Naive thymus-derived CD4-positive, alpha-beta T cell (primary cell): ENCODE measurements at regions of chr11 and their contacts with region 1.

Region 1: GRCh38 chr11:123062158-123062891 is 389 bp upstream of the HSPA8 start:
- DNase-seq: peak; percentile 97 to 100 (median 100)
- ATAC-seq: peak; percentile 89
- H3K4me3 ChIP-seq: peak overlapping the region; percentile 91
- H3K4me3 Mint-ChIP-seq: peak overlapping the region; percentile 87 to 100 (median 99)
- H3K27ac ChIP-seq: peak overlapping the region; percentile 96
- H3K27ac Mint-ChIP-seq: peak overlapping the region; percentile 96 to 100 (median 99)
- H3K4me1 ChIP-seq: peaks cover 42 to 55% of the 10 kb centered on the region in 2 donors
- H3K4me1 Mint-ChIP-seq: peaks cover 48 to 67% (median 56%) of the 10 kb centered on the region in 7 donors
- H3K27me3 ChIP-seq: no peaks in the 10 kb centered on the region
- H3K27me3 Mint-ChIP-seq: peaks cover 0 to 7% (median 0%) of the 10 kb centered on the region in 5 donors

Region 2: DNA sequence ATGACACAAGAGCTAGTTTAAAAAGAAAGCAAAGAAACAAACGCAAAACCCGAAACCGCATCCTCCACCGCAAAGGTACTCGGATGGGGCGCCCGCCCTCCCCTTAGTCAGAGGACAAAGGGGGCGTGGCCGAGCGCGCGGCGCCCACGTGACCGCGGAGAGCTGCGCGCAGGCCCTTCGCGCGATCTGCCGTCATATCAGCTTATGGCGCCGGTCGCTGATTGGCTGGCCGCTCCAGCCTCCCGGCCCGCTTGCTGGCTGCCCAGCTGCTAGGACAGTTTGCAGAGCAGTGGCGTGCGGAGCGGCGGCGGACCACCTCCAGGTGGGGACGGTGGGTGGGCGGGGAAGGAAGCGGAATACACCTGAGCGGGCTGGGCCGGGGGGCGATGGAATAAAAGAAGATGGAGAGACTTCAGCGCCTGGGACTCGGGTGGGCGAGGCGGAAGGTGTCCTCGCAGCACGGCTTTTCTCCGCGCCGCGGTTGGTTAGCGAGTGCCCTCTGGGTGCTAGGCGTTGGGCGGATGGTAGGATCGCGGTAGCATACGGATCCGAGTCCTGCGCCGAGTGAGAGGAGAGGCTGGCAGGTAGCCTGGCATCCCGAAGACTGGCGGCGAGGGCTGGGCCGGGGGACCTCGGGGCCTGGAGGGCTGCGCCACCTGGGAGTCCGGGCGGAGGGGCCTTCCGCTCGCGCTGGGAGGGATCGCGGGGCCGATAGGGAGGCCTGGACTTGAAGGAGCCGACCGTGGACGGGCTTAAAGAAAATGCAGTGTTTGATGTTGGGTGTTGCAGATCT is 1769.6 kb before region 1 on chr11 and contains the start of gene SC5D:
- CTCF ChIA-PET with region 1: no interaction called
- POLR2A ChIA-PET with region 1: no interaction called
- intact Hi-C with region 1: loop called in 1 of 2 experiments (anchors 5 kb)
- DNase-seq: peak; percentile 94 to 98 (median 96)
- ATAC-seq: peak; percentile 96
- H3K4me3 ChIP-seq: peak within 1 kb of the TSS; percentile 72
- H3K4me3 Mint-ChIP-seq: peak within 1 kb of the TSS; percentile 90 to 100 (median 94)
- H3K27ac ChIP-seq: peak within 1 kb of the TSS; percentile 95
- H3K27ac Mint-ChIP-seq: peak within 1 kb of the TSS; percentile 88 to 100 (median 99)
- H3K4me1 ChIP-seq: peaks cover 6 to 18% of the 10 kb centered on the region in 2 donors
- H3K4me1 Mint-ChIP-seq: peaks cover 35 to 66% (median 58%) of the 10 kb centered on the region in 7 donors
- H3K27me3 ChIP-seq: no peaks in the 10 kb centered on the region
- H3K27me3 Mint-ChIP-seq: peaks cover 0 to 12% (median 0%) of the 10 kb centered on the region in 5 donors
- total RNA-seq, gene SC5D: 21.5 to 48.7 (median 32.8) TPM

Region 3: DNA sequence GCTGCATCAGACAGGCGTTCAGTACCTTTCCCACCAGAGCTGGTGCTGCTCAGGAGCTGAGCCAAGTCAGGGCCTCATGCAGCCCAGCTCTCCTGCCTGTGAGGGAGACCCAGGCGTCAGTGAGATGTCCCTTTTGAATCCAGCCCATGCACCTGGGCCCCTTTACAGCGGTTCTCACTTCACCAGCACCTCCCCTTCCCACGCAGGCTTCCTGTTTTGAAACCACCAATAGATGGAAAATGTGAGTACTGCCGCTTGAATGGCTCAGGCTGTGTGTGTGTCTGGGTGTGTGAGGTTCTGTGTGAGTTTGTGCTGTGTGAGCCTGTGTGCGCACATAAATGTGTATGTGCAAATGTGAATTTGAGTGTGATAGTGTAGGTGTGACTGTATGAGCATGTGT is 318.4 kb before region 1 on chr11:
- CTCF ChIA-PET with region 1: interaction called, 3 read pairs
- POLR2A ChIA-PET with region 1: interaction called, 6 read pairs
- intact Hi-C with region 1: loop called in 1 of 2 experiments (anchors 1 kb)
- DNase-seq: peak; percentile 28 to 90 (median 80)
- ATAC-seq: peak; percentile 75
- H3K4me3 ChIP-seq: peak overlapping the region; percentile 39
- H3K4me3 Mint-ChIP-seq: no peak overlapping the region
- H3K27ac ChIP-seq: peak overlapping the region; percentile 84
- H3K27ac Mint-ChIP-seq: no peak overlapping the region
- H3K4me1 ChIP-seq: peaks cover 58 to 66% of the 10 kb centered on the region in 2 donors
- H3K4me1 Mint-ChIP-seq: peaks cover 0 to 40% (median 18%) of the 10 kb centered on the region in 7 donors
- H3K27me3 ChIP-seq: no peaks in the 10 kb centered on the region
- H3K27me3 Mint-ChIP-seq: peaks cover 0 to 21% (median 0%) of the 10 kb centered on the region in 5 donors

Region 4: DNA sequence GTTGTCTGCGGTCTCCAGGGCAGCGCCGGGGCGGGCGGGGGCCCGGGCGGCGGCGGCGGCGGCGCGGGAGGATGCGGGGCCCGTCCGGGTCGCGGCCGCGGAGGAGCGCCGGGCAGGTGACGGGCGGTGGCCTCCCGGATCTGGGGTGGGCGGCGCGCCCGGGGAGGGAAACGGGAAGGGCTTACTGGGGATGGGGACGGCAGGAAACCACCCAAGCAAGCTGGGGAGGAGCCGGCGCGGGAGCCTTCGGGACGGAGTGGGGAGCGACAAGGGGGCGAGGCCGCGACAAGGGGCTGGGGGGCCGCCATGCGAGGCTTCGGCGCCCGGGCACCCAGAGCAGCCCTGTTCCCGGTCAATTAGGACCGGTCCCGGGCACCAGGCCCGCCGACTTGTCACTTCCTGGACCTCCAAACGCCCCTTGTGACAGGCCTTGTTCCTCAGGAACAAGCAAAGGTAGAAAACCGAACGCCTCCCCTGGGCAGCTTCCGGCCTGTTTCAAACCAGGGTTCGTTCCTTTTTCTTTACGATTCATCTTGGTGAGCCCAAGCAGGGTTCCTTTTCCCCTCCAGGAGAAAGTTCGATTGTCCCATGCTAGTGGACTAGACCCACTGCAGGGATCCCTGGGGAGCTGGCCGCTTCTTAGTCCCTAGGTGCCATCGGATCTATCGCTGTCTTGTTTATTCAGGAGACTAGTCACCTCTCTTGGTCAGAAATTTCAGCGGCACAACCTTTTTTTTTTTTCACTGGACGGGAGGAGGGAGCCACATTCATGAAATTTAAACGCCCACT is 179.3 kb before region 1 on chr11:
- CTCF ChIA-PET with region 1: interaction called, 3 read pairs
- POLR2A ChIA-PET with region 1: no interaction called
- intact Hi-C with region 1: loop called in 1 of 2 experiments (anchors 1 kb)
- DNase-seq: peak; percentile 36 to 65 (median 53)
- ATAC-seq: peak; percentile 86
- H3K4me3 ChIP-seq: peak overlapping the region; percentile 74
- H3K4me3 Mint-ChIP-seq: peak overlapping the region; percentile 83 to 90 (median 88)
- H3K27ac ChIP-seq: peak overlapping the region; percentile 76
- H3K27ac Mint-ChIP-seq: peak overlapping the region; percentile 73 to 93 (median 90)
- H3K4me1 ChIP-seq: peaks cover 8 to 14% of the 10 kb centered on the region in 2 donors
- H3K4me1 Mint-ChIP-seq: peaks cover 6 to 39% (median 28%) of the 10 kb centered on the region in 7 donors
- H3K27me3 ChIP-seq: no peaks in the 10 kb centered on the region
- H3K27me3 Mint-ChIP-seq: peaks cover 0 to 15% (median 0%) of the 10 kb centered on the region in 5 donors

Region 5: GRCh38 chr11:123103326-123103980 is 41.1 kb after region 1 on chr11:
- CTCF ChIA-PET with region 1: interaction called, 119 read pairs
- POLR2A ChIA-PET with region 1: interaction called, 532 read pairs
- intact Hi-C with region 1: loop called (anchors 1 to 5 kb)
- DNase-seq: peak in 7 of 9 donors; percentile 38 to 63 (median 51)
- ATAC-seq: peak; percentile 76
- H3K4me3 ChIP-seq: no peak overlapping the region
- H3K4me3 Mint-ChIP-seq: peak overlapping the region in 5 of 10 donors; percentile 14 to 63 (median 14)
- H3K27ac ChIP-seq: no peak overlapping the region
- H3K27ac Mint-ChIP-seq: peak overlapping the region in 8 of 9 donors; percentile 8 to 91 (median 51)
- H3K4me1 ChIP-seq: peaks cover 0 to 15% of the 10 kb centered on the region in 2 donors
- H3K4me1 Mint-ChIP-seq: peaks cover 16 to 43% (median 38%) of the 10 kb centered on the region in 7 donors
- H3K27me3 ChIP-seq: no peaks in the 10 kb centered on the region
- H3K27me3 Mint-ChIP-seq: peaks cover 0 to 7% (median 0%) of the 10 kb centered on the region in 5 donors

Region 6: DNA sequence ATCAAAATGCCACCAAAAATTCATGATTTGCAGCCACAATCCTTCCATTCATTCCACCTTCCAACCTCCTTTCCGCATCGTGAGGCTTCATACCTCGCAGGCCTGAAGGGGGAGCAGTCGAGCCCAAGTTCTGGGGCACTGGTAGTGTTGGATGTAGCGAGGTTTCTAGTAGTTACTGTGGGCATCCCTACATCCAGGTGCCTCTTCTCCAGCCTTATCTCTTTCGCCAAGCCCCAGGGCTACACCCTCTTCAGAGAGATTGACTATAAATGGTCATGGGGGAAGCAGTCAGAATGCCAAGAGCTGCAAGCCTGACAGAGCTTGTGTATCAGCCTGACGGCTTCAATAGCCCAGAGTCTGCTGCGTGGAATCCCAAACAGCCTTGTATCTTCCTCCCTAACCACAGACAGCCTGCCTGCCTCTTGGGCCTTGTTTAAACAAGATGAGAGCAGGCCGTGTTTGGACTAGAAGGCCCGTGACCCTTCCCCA is 103.8 kb after region 1 on chr11:
- CTCF ChIA-PET with region 1: no interaction called
- POLR2A ChIA-PET with region 1: no interaction called
- intact Hi-C with region 1: no loop called
- DNase-seq: peak in 1 of 9 donors; percentile 24
- ATAC-seq: no peak
- H3K4me3 ChIP-seq: no peak overlapping the region
- H3K4me3 Mint-ChIP-seq: no peak overlapping the region
- H3K27ac ChIP-seq: no peak overlapping the region
- H3K27ac Mint-ChIP-seq: peak overlapping the region in 1 of 9 donors; percentile 38
- H3K4me1 ChIP-seq: no peaks in the 10 kb centered on the region
- H3K4me1 Mint-ChIP-seq: peaks cover 0 to 1% (median 0%) of the 10 kb centered on the region in 7 donors
- H3K27me3 ChIP-seq: no peaks in the 10 kb centered on the region
- H3K27me3 Mint-ChIP-seq: peaks cover 0 to 14% (median 5%) of the 10 kb centered on the region in 5 donors

Region 7: DNA sequence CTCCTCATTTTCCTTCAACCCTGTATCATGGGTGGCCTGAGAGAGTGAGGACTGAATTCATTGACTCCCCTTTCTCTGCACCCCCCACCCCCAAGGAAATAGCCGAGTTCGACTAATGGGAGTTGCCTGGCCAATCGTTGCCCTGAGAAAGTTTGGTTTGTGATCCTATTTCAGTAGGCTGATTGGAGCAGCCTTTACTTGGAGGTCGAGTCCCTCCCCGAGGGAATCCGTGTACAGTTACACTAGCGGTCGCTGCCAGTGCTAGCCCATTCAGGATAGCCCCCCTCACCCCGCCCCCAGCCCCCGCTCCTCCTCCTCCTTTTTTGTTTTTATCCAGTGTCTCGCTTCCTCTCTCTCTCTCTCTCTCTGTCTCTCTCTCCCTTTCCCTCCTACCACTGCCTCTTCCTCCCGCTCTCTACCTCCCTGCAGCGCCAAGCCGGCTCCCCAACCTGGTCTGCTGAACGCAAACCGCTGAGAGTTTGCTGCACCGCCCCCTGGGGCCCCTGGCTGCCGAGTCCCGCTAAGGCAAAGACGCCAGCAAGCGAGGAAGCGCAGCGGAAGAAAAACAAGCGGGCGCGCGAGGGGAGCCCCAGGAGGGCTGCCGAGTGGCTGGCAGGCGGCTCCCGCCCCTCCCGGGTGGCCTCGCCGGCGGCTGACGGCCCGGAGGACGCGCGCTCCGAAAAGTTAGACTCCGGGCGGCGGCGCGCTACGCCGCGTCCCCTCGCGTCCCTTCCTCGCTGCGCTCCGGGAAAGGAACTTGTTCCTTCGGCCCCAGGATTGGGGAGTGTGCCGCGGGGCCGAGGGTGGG is 367.8 kb after region 1 on chr11 and contains the start of gene GRAMD1B:
- CTCF ChIA-PET with region 1: no interaction called
- POLR2A ChIA-PET with region 1: no interaction called
- intact Hi-C with region 1: loop called (anchors 1 to 10 kb)
- DNase-seq: peak; percentile 60 to 84 (median 78)
- ATAC-seq: peak; percentile 84
- H3K4me3 ChIP-seq: peak within 1 kb of the TSS; percentile 53
- H3K4me3 Mint-ChIP-seq: peak within 1 kb of the TSS; percentile 85 to 99 (median 88)
- H3K27ac ChIP-seq: peak within 1 kb of the TSS; percentile 60
- H3K27ac Mint-ChIP-seq: peak within 1 kb of the TSS; percentile 46 to 94 (median 76)
- H3K4me1 ChIP-seq: peaks cover 0 to 12% of the 10 kb centered on the region in 2 donors
- H3K4me1 Mint-ChIP-seq: peaks cover 15 to 65% (median 25%) of the 10 kb centered on the region in 7 donors
- H3K27me3 ChIP-seq: no peaks in the 10 kb centered on the region
- H3K27me3 Mint-ChIP-seq: no peaks in the 10 kb centered on the region
- total RNA-seq, gene GRAMD1B: 9.7 to 88.9 (median 14.0) TPM